Naive thymus-derived CD4-positive, alpha-beta T cell (primary cell): ENCODE measurements at regions of chr12 and their contacts with region 1.

Region 1: GRCh38 chr12:107718606-107719005 is 33.0 kb downstream of the PWP1 start:
- DNase-seq: no peak
- ATAC-seq: no peak
- H3K4me3 ChIP-seq: no peak overlapping the region
- H3K4me3 Mint-ChIP-seq: no peak overlapping the region
- H3K27ac ChIP-seq: no peak overlapping the region
- H3K27ac Mint-ChIP-seq: peak overlapping the region in 1 of 9 donors; percentile 3
- H3K4me1 ChIP-seq: no peaks in the 10 kb centered on the region
- H3K4me1 Mint-ChIP-seq: no peaks in the 10 kb centered on the region
- H3K27me3 ChIP-seq: no peaks in the 10 kb centered on the region
- H3K27me3 Mint-ChIP-seq: no peaks in the 10 kb centered on the region

Region 2: DNA sequence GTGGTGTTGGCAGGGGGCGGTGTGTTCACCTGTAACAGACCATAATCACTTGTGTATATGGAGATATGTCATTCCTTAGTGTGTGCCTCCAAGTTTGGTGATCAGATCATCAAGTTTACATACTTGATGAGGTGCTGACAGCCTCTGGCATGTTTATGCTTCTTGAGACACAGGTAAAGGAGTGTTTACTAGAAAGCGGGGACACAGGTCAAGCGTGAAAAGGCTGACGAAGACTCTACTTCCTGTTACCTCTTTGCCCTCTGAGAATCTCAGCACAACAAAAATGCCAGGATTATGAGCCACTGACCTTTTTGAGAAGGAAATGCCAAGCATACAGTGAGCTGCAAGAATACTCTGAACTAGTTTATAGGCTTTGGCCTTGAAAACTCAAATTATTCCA is 12.8 kb after region 1 on chr12:
- CTCF ChIA-PET with region 1: no interaction called
- POLR2A ChIA-PET with region 1: no interaction called
- intact Hi-C with region 1: loop called in 1 of 2 experiments (anchors 1 kb)
- DNase-seq: no peak
- ATAC-seq: no peak
- H3K4me3 ChIP-seq: no peak overlapping the region
- H3K4me3 Mint-ChIP-seq: no peak overlapping the region
- H3K27ac ChIP-seq: no peak overlapping the region
- H3K27ac Mint-ChIP-seq: no peak overlapping the region
- H3K4me1 ChIP-seq: no peaks in the 10 kb centered on the region
- H3K4me1 Mint-ChIP-seq: peaks cover 0 to 4% (median under 1%) of the 10 kb centered on the region in 7 donors
- H3K27me3 ChIP-seq: no peaks in the 10 kb centered on the region
- H3K27me3 Mint-ChIP-seq: no peaks in the 10 kb centered on the region